ENCODE measurements at regions of chr4 and their contacts with region 1.

Region 1: GRCh38 chr4:71184195-71184781 is 154.5 kb upstream of the SLC4A4 start:
- DNase-seq: peak; percentile 56
- ATAC-seq: peak; percentile 20
- H3K4me3 Mint-ChIP-seq: no peak overlapping the region
- H3K27ac Mint-ChIP-seq: no peak overlapping the region
- H3K4me1 Mint-ChIP-seq: peaks cover 16% of the 10 kb centered on the region
- H3K27me3 Mint-ChIP-seq: peaks cover 37% of the 10 kb centered on the region

Region 2: DNA sequence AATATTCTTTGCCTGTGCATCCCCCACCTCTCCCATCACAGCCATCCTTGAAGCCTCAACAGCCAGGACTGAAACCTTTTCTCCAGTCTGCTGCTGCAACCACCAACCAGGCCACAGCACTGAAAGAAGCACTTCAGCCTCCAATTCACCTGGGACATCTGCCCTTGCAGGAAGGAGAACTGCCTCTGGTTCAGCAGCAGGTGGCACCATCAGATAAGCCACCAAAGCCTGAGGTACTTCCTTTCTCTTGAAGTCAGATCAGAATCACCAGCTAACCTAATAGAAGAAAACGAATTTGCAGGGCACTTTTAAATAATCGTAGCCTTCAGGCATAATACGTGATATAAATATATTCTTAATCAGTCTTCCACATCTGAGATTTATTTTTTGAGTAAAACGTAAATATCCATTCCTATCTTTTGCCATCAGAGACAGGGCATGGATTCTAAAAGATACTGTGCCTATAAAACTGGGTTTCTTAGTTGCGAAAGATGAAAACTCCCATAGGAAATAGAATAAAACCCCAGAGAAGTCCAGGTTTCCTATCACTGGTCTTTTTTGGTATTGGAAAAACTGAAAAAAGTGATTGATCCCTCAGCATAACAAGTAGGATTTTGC is 582.8 kb before region 1 on chr4:
- CTCF ChIA-PET with region 1: no interaction called
- POLR2A ChIA-PET with region 1: no interaction called
- intact Hi-C with region 1: loop called in 1 of 2 experiments (anchors 5 kb)
- DNase-seq: peak; percentile 79
- ATAC-seq: peak; percentile 92
- H3K4me3 Mint-ChIP-seq: no peak overlapping the region
- H3K27ac Mint-ChIP-seq: no peak overlapping the region
- H3K4me1 Mint-ChIP-seq: no peaks in the 10 kb centered on the region
- H3K27me3 Mint-ChIP-seq: peaks cover 2% of the 10 kb centered on the region

Region 3: DNA sequence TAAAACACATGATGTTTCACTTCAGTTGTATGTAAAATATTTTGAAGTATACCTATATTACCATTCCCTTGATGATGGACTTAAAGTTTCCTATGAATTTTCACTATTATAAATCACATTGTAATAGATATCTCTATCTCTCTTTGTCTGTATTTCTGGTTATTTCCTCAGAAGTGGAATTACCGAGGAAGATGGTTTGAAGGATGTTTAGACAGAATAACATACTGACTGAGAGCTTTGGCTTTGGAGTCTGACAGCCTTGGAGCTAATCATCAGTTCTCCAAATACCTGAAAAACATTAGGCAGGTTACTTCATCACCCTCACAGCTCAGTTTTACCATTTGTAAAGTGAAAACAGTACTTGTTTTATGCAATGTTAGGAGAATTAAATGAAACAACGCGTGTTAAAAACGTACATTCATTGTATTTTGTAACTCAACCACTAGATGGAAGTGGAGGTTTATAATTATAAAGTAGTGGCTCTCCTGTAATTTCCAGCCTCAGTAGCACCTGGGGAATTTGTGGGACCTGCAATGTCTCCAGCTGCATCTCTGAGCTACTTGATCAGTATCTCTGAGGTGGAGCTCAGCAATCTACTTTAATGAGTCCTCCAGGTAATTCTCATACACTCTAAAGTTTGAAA is 532.3 kb before region 1 on chr4:
- CTCF ChIA-PET with region 1: no interaction called
- POLR2A ChIA-PET with region 1: no interaction called
- intact Hi-C with region 1: loop called in 1 of 2 experiments (anchors 10 kb)
- DNase-seq: no peak
- ATAC-seq: peak; percentile 39
- H3K4me3 Mint-ChIP-seq: no peak overlapping the region
- H3K27ac Mint-ChIP-seq: no peak overlapping the region
- H3K4me1 Mint-ChIP-seq: no peaks in the 10 kb centered on the region
- H3K27me3 Mint-ChIP-seq: peaks cover 3% of the 10 kb centered on the region

Region 4: DNA sequence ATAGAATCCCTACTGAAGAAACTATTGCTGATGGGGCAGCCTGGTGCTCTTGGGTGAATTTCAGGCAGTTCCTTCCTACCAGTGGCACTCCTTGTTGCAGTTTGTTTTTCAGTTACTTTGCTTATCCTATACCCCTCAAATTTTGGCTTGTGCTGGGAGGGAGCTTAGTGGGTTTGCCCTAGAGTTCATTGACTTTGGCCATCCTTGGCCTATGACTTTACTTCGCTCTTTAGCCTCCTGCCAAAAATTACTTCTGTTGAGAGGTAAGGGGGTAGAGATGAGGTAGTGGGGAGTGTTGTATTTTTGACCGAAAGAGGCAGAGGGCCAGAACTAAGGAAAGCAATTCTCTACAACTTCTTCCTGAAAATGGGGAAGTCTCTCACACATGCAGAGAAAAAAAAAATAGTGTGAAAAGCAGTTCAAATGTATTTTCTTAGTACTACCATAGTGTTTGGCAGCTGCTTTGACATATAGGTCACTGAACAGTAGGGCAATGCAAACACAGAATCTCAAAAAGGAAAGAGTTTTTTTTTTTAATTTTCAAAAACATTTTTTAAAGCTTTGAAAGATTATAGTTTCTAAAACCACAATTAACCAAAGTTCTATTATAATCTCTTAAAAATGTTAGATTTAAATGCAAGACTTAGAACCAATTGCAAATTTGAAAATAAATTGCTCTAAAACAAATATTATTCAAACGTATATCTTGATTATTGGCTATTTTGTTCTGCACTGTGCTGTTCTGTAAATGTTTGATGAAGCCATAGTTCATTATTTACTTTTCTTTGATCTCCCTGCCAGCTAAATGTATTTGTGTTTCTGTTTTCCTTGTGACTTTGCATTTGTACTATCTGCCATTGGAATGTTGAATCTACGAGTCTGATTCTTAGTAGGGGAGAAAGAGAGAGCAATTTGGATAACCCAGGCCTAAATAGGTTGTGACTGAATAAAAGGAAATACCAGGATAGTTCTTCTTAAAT is 117.3 kb before region 1 on chr4:
- CTCF ChIA-PET with region 1: no interaction called
- POLR2A ChIA-PET with region 1: no interaction called
- intact Hi-C with region 1: no loop called
- DNase-seq: no peak
- ATAC-seq: no peak
- H3K4me3 Mint-ChIP-seq: no peak overlapping the region
- H3K27ac Mint-ChIP-seq: no peak overlapping the region
- H3K4me1 Mint-ChIP-seq: no peaks in the 10 kb centered on the region
- H3K27me3 Mint-ChIP-seq: no peaks in the 10 kb centered on the region

Region 5: GRCh38 chr4:71558248-71558647 is 374.0 kb after region 1 on chr4:
- CTCF ChIA-PET with region 1: no interaction called
- POLR2A ChIA-PET with region 1: no interaction called
- intact Hi-C with region 1: loop called in 1 of 2 experiments (anchors 5 kb)
- DNase-seq: no peak
- ATAC-seq: peak; percentile 94
- H3K4me3 Mint-ChIP-seq: no peak overlapping the region
- H3K27ac Mint-ChIP-seq: no peak overlapping the region
- H3K4me1 Mint-ChIP-seq: peaks cover 4% of the 10 kb centered on the region
- H3K27me3 Mint-ChIP-seq: peaks cover 3% of the 10 kb centered on the region

Region 6: GRCh38 chr4:71713611-71714203 is 529.4 kb after region 1 on chr4:
- CTCF ChIA-PET with region 1: interaction called, 4 read pairs
- POLR2A ChIA-PET with region 1: no interaction called
- intact Hi-C with region 1: loop called (anchors 2 kb)
- DNase-seq: no peak
- ATAC-seq: no peak
- H3K4me3 Mint-ChIP-seq: no peak overlapping the region
- H3K27ac Mint-ChIP-seq: no peak overlapping the region
- H3K4me1 Mint-ChIP-seq: no peaks in the 10 kb centered on the region
- H3K27me3 Mint-ChIP-seq: peaks cover 2% of the 10 kb centered on the region

Region 7: GRCh38 chr4:72352403-72353105 is 1168.3 kb after region 1 on chr4:
- CTCF ChIA-PET with region 1: no interaction called
- POLR2A ChIA-PET with region 1: no interaction called
- intact Hi-C with region 1: no loop called
- DNase-seq: no peak
- ATAC-seq: no peak
- H3K4me3 Mint-ChIP-seq: no peak overlapping the region
- H3K27ac Mint-ChIP-seq: no peak overlapping the region
- H3K4me1 Mint-ChIP-seq: no peaks in the 10 kb centered on the region
- H3K27me3 Mint-ChIP-seq: peaks cover 5% of the 10 kb centered on the region

Region 8: GRCh38 chr4:72442715-72443114 is 1258.4 kb after region 1 on chr4:
- CTCF ChIA-PET with region 1: no interaction called
- POLR2A ChIA-PET with region 1: no interaction called
- intact Hi-C with region 1: no loop called
- DNase-seq: no peak
- ATAC-seq: no peak
- H3K4me3 Mint-ChIP-seq: no peak overlapping the region
- H3K27ac Mint-ChIP-seq: no peak overlapping the region
- H3K4me1 Mint-ChIP-seq: no peaks in the 10 kb centered on the region
- H3K27me3 Mint-ChIP-seq: peaks cover 2% of the 10 kb centered on the region

Measured in activated CD4-positive, alpha-beta T cell treated with anti-CD3 and anti-CD28 coated beads for 36 hours (primary cell).